CD8-positive, alpha-beta T cell (primary cell): ENCODE measurements at regions of chr9 and their contacts with region 1.

Region 1: DNA sequence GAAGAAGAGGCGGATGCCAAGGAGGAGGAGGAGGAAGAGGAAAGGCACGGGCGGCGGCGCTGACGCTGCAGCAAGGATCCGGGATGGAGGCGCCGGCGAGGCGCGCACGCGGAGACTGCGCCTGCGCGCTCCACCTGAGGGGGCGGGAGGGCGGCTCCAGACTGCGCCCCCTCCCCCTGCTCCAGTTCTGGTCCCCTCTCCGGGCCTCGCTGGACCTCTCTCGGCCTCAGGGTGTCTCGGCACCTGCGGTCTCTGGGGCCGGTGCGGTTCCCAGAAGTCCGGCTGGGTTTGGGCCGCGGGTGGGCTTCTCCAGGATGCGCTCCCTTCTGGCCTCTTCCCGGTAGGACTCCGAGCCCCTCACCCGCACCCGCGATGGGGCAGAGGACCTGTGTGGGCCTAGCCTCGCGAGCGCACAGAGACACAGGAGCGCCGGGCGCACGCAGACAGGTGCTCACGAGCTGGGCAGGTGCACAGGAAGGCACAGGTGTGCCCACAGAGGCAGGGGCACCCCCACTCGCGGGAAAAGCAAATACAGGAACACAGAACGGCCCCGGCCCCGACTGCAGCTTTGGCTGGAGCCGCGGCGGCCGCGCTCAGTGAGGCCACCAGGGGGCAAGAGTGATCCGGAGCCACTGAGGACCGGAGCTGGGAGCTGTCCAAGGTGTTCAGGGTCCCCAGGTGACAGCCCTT is at the start of gene NPDC1:
- DNase-seq: peak; percentile 64 to 87 (median 80)
- ATAC-seq: peak; percentile 87
- H3K4me3 ChIP-seq: peak within 1 kb of the TSS; percentile 28 to 45
- H3K4me3 Mint-ChIP-seq: peak within 1 kb of the TSS; percentile 68
- H3K27ac ChIP-seq: no peak within 1 kb of the TSS
- H3K27ac Mint-ChIP-seq: no peak within 1 kb of the TSS
- H3K4me1 ChIP-seq: peaks cover 29% of the 10 kb centered on the region
- H3K4me1 Mint-ChIP-seq: peaks cover 16% of the 10 kb centered on the region
- H3K27me3 ChIP-seq: peaks cover 44 to 67% of the 10 kb centered on the region in 2 experiments
- H3K27me3 Mint-ChIP-seq: peaks cover 26% of the 10 kb centered on the region
- CTCF ChIP-seq: peak; percentile 84
- total RNA-seq, gene NPDC1: 29.7 to 29.8 TPM

Region 2: GRCh38 chr9:136981588-136982231 is 64.5 kb before region 1 on chr9:
- CTCF ChIA-PET with region 1: no interaction called
- POLR2A ChIA-PET with region 1: no interaction called
- intact Hi-C with region 1: no loop called
- DNase-seq: peak in 1 of 9 experiments; percentile 16
- ATAC-seq: no peak
- H3K4me3 ChIP-seq: no peak overlapping the region
- H3K4me3 Mint-ChIP-seq: no peak overlapping the region
- H3K27ac ChIP-seq: no peak overlapping the region
- H3K27ac Mint-ChIP-seq: no peak overlapping the region
- H3K4me1 ChIP-seq: peaks cover 20% of the 10 kb centered on the region
- H3K4me1 Mint-ChIP-seq: peaks cover 5% of the 10 kb centered on the region
- H3K27me3 ChIP-seq: peaks cover 3 to 14% of the 10 kb centered on the region in 2 experiments
- H3K27me3 Mint-ChIP-seq: peaks cover 8% of the 10 kb centered on the region
- CTCF ChIP-seq: no peak

Region 3: GRCh38 chr9:137070201-137070905 is 24.1 kb after region 1 on chr9 and contains the start of gene SAPCD2:
- CTCF ChIA-PET with region 1: interaction called, 103 read pairs
- POLR2A ChIA-PET with region 1: interaction called, 3 read pairs
- intact Hi-C with region 1: loop called (anchors 1 kb)
- DNase-seq: peak; percentile 66 to 94 (median 82)
- ATAC-seq: peak; percentile 87
- H3K4me3 ChIP-seq: peak within 1 kb of the TSS; percentile 46 to 50
- H3K4me3 Mint-ChIP-seq: peak within 1 kb of the TSS; percentile 70
- H3K27ac ChIP-seq: peak within 1 kb of the TSS in 1 of 2 experiments; percentile 30
- H3K27ac Mint-ChIP-seq: no peak within 1 kb of the TSS
- H3K4me1 ChIP-seq: peaks cover 14% of the 10 kb centered on the region
- H3K4me1 Mint-ChIP-seq: peaks cover 14% of the 10 kb centered on the region
- H3K27me3 ChIP-seq: peaks cover 0 to 9% of the 10 kb centered on the region in 2 experiments
- H3K27me3 Mint-ChIP-seq: no peaks in the 10 kb centered on the region
- CTCF ChIP-seq: no peak
- total RNA-seq, gene SAPCD2: 0.38 to 0.47 TPM